ENCODE measurements at regions of chr4 and their contacts with region 1.

Region 1: GRCh38 chr4:52560844-52561280 is 98.2 kb downstream of the USP46 start:
- DNase-seq: no peak
- H3K4me3 ChIP-seq: no peak overlapping the region
- H3K27ac ChIP-seq: no peak overlapping the region
- H3K4me1 ChIP-seq: no peaks in the 10 kb centered on the region
- H3K27me3 ChIP-seq: no peaks in the 10 kb centered on the region
- CTCF ChIP-seq: no peak

Region 2: GRCh38 chr4:52874948-52875347 is 314.1 kb after region 1 on chr4:
- CTCF ChIA-PET with region 1: no interaction called
- POLR2A ChIA-PET with region 1: interaction called, 11 read pairs
- intact Hi-C with region 1: no loop called
- DNase-seq: no peak
- H3K4me3 ChIP-seq: no peak overlapping the region
- H3K27ac ChIP-seq: no peak overlapping the region
- H3K4me1 ChIP-seq: no peaks in the 10 kb centered on the region
- H3K27me3 ChIP-seq: no peaks in the 10 kb centered on the region
- CTCF ChIP-seq: no peak